ENCODE measurements at regions of chr11 and their contacts with region 1.

Region 1: GRCh38 chr11:118605116-118605867 is 2.1 kb upstream of the PHLDB1 start:
- DNase-seq: no peak
- ATAC-seq: no peak
- H3K4me3 ChIP-seq: no peak overlapping the region
- H3K27ac ChIP-seq: no peak overlapping the region
- H3K4me1 ChIP-seq: peaks cover 5% of the 10 kb centered on the region; the same call in 1 of the 2 replicates
- H3K27me3 ChIP-seq: no peaks in the 10 kb centered on the region
- CTCF ChIP-seq: no peak

Region 2: GRCh38 chr11:118572061-118572980 is 33.0 kb before region 1 on chr11 and contains the start of gene ARCN1:
- CTCF ChIA-PET with region 1: interaction called, 4 read pairs
- POLR2A ChIA-PET with region 1: interaction called, 10 read pairs
- in situ Hi-C with region 1: no loop called
- intact Hi-C with region 1: no loop called
- DNase-seq: no peak
- ATAC-seq: peak; percentile 92
- H3K4me3 ChIP-seq: peak within 1 kb of the TSS; percentile 92 to 93
- H3K27ac ChIP-seq: peak within 1 kb of the TSS; percentile 94
- H3K4me1 ChIP-seq: peaks cover 28% of the 10 kb centered on the region
- H3K27me3 ChIP-seq: no peaks in the 10 kb centered on the region
- CTCF ChIP-seq: no peak
- total RNA-seq, gene ARCN1: 197 TPM

Region 3: DNA sequence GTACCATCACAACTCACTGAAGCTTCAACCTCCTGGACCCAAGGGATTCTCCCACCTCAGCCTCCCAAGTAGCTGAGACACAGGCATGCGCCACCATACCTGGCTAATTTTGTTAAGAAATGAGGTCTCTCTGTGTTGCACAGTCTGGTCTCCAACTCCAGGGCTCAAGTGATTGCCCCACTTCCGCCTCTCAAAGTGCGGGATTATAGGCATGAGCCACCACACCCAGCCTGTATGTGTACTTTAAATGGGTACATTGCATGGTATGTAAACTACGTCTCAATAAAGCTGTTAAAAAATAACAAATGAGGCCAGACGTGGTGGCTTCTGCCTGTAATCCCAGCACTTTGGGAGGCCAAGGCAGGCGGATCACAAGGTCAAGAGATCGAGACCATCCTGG is 221.8 kb after region 1 on chr11:
- CTCF ChIA-PET with region 1: no interaction called
- POLR2A ChIA-PET with region 1: no interaction called
- in situ Hi-C with region 1: no loop called
- intact Hi-C with region 1: no loop called
- DNase-seq: no peak
- ATAC-seq: no peak
- H3K4me3 ChIP-seq: no peak overlapping the region
- H3K27ac ChIP-seq: no peak overlapping the region
- H3K4me1 ChIP-seq: no peaks in the 10 kb centered on the region
- H3K27me3 ChIP-seq: no peaks in the 10 kb centered on the region
- CTCF ChIP-seq: no peak

Measured in Panc1 (cell line).